Right cardiac atrium (tissue), 5 donors: ENCODE measurements at regions of chr20 and their contacts with region 1.

Region 1: DNA sequence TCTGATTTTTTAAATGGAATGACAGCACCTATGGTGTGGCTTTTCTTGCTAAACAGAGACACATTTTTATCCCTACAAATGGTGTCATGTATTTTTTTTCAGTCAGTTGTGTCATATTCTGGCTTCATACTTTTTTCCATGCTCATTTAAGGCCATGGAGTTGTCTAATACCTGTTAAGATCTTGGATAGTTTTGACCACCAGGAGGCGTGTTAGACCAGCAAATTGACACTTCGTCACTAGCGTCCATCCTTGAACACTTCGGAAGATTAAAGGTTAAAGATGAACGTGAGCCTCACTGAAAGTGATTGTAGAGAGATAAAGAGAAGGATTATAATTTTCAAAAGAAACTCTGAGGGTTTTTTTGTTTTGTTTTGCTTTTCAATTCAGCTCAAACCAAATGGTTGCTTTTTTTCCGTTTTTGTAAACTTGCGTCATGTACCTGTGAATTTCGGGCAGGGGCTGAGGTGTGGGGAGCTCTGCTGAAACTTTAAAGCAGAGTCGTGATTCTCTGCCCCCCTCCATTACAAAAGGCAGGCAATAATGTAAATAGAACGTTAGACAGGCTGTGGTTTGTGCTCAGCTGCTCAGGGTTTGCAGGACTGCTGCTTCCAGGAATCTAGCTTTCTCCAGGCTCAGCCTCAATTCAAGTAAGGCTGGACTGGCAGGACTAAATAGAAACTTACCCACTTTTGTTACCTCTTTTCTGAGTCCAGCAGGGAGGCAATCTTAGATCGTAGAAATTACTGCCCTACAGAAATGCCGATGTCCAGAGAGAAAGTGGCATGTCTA is 245.1 kb downstream of the FOXA2 start:
- DNase-seq: no peak
- ATAC-seq: peak in 1 of 2 donors; percentile 70
- H3K4me3 ChIP-seq: no peak overlapping the region
- H3K27ac ChIP-seq: no peak overlapping the region
- H3K4me1 ChIP-seq: no peaks in the 10 kb centered on the region
- H3K27me3 ChIP-seq: peaks cover 3% of the 10 kb centered on the region

Region 2: DNA sequence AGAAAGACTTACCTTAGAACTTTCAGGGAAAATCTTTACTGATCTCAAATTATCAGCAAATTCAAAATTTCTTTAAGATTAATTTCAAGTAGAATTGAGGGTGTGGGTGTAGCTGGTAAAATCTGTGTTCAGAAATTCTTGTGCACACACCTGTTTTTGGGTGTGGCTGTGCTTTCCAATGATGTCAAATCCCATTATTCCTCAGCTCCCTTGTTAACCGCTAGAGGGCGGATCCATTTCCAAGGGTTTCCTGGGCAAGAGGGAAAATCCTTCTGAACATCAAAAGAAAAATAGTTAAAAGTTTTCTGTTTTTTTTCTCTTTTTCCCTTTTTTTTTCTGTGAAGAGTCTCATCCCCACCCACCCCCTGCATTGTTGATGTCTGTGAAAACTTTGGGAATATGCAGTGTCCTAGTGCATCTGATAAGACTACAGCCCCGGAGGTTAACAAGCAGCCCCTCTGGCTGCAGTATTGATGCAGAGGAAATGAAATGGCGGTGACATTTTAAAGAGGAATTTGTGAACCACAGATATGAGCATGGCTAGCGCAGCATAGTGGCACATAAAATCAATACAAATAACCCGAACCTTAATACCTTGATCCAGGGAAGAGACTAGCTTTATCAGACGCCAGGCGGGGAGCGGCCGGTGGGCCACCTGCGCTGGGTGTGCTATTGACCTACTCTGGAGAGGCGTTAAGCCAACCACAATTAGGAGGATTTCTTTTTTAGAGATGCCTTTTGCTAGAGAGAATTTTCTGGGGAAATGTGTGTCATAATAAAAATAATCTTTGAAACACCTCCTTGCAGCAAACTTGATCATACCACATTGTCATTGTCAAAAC is 114.2 kb after region 1 on chr20:
- intact Hi-C with region 1: no loop called
- DNase-seq: no peak
- ATAC-seq: no peak
- H3K4me3 ChIP-seq: no peak overlapping the region
- H3K27ac ChIP-seq: no peak overlapping the region
- H3K4me1 ChIP-seq: no peaks in the 10 kb centered on the region
- H3K27me3 ChIP-seq: peaks cover 5% of the 10 kb centered on the region

Region 3: DNA sequence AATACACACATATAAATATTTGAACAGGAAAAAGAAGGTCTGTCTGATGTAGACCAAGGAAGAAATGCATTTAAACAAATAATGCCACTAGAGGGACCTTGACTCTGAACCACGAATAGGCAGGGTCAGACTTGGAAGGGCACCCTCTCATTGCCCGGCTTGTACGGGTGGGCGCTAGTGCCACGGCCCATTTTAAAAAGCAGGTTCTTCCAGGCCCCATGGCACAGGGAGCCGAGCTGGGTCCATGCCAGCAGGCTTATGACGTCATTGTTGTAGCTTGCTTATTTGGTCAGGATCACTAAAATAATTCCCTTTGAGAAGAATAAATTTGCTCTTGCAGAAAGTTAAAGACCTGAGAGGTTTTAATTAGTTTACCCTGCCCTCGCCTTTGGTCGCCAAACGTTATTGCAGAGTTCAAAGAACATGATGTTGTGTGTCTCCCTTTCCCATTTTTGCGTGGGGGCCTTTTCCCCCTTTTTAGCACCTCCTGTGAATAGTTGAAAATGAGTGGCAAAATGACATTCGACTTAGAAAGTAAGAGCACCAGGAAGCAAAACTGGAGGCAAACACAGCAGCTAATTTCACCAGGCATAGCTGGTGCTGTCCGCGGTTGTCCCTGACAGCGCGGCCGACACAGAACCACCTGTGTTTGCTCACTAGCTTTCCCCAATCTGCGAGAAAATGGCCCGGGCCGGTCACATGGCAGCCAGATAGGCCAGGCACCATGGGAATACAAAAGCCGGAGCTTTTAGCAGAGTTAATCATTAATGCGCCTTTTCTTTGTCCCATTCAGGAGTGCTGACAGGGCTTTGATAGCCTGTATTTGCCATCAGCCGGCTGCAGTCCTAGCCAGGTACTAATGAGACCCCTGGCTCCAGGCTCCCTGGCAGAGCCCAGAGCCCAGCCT is 151.3 kb after region 1 on chr20:
- intact Hi-C with region 1: no loop called
- DNase-seq: peak in 2 of 3 donors; percentile 27 to 59
- ATAC-seq: peak in 1 of 2 donors; percentile 50
- H3K4me3 ChIP-seq: no peak overlapping the region
- H3K27ac ChIP-seq: no peak overlapping the region
- H3K4me1 ChIP-seq: no peaks in the 10 kb centered on the region
- H3K27me3 ChIP-seq: peaks cover 2% of the 10 kb centered on the region

Region 4: GRCh38 chr20:22684072-22684762 is 344.9 kb after region 1 on chr20:
- intact Hi-C with region 1: loop called (anchors 2 to 5 kb)
- DNase-seq: peak; percentile 57 to 87 (median 74)
- ATAC-seq: peak; percentile 80 to 85
- H3K4me3 ChIP-seq: no peak overlapping the region
- H3K27ac ChIP-seq: no peak overlapping the region
- H3K4me1 ChIP-seq: no peaks in the 10 kb centered on the region
- H3K27me3 ChIP-seq: no peaks in the 10 kb centered on the region